ENCODE measurements at regions of chr12 and their contacts with region 1.

Region 1: GRCh38 chr12:121762269-121762668 is 31.2 kb downstream of the RHOF start:
- DNase-seq: no peak
- H3K4me3 ChIP-seq: no peak overlapping the region
- H3K27ac ChIP-seq: no peak overlapping the region
- H3K27me3 ChIP-seq: no peaks in the 10 kb centered on the region
- CTCF ChIP-seq: no peak

Region 2: DNA sequence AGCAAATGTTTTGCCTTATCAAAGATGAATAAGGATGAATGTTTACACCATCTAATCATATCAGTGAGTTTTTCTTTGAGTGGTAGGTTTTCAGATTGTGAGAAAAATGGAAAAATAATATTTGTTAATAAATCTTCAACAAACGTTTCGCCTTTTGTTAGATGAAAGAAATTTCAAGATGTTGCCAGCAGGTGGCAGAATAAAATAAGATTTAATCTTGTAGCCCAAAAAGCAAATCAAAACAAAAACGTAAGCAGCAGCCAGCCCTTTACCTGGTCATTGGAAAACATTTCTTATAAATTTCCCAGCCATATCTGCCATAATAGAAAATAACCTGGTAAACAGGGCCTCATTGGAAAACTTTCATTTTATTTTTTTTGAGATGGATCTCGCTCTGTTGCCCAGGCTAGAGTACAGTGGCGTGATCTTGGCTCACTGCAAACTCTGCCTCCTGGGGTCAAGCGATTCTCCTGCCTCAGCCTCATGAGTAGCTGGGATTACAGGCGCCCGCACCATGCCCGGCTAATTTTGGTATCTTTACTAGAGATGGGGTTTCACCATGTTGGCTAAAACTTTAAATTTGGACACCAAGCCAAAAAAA is 65.1 kb before region 1 on chr12:
- CTCF ChIA-PET with region 1: interaction called, 12 read pairs
- POLR2A ChIA-PET with region 1: no interaction called
- DNase-seq: no peak
- H3K4me3 ChIP-seq: no peak overlapping the region
- H3K27ac ChIP-seq: no peak overlapping the region
- H3K27me3 ChIP-seq: peaks cover 2% of the 10 kb centered on the region
- CTCF ChIP-seq: peak; percentile 47

Region 3: DNA sequence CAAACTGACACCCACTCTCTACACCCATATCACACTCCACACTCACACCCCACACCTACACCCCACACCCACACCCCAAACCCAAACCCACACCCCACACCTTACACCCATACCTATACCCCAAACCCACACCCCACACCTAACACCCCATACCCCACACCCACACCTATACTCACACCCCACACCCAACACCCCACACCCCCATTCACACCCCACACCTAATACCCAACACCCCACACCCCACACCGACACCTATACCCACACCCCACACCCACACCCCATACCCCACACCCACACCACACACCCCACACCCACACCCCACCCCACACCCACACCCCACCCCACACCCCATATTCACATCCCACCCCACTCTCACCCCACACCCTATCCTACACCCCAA is 11.2 kb before region 1 on chr12:
- CTCF ChIA-PET with region 1: no interaction called
- POLR2A ChIA-PET with region 1: no interaction called
- DNase-seq: no peak
- H3K4me3 ChIP-seq: no peak overlapping the region
- H3K27ac ChIP-seq: no peak overlapping the region
- H3K27me3 ChIP-seq: no peaks in the 10 kb centered on the region
- CTCF ChIP-seq: no peak

Region 4: GRCh38 chr12:121823101-121823726 is 60.9 kb after region 1 on chr12:
- CTCF ChIA-PET with region 1: no interaction called
- POLR2A ChIA-PET with region 1: no interaction called
- DNase-seq: no peak
- H3K4me3 ChIP-seq: no peak overlapping the region
- H3K27ac ChIP-seq: no peak overlapping the region
- H3K27me3 ChIP-seq: no peaks in the 10 kb centered on the region
- CTCF ChIP-seq: peak; percentile 11; the same call in 1 of the 2 replicates

Measured in AG04450 (cell line).